ENCODE measurements at regions of chr7 and their contacts with region 1.

Region 1: GRCh38 chr7:54773472-54774399 is 14.7 kb upstream of the SEC61G start:
- DNase-seq: peak; percentile 75 to 91 (median 82)
- ATAC-seq: peak; percentile 100
- H3K4me3 ChIP-seq: peak overlapping the region; percentile 4 to 21
- H3K27ac ChIP-seq: peak overlapping the region; percentile 1 to 41
- H3K4me1 ChIP-seq: peaks cover 0 to 8% of the 10 kb centered on the region in 2 donors
- H3K27me3 ChIP-seq: peaks cover 0 to 9% of the 10 kb centered on the region in 2 donors
- CTCF ChIP-seq: peak; percentile 80 to 82

Region 2: DNA sequence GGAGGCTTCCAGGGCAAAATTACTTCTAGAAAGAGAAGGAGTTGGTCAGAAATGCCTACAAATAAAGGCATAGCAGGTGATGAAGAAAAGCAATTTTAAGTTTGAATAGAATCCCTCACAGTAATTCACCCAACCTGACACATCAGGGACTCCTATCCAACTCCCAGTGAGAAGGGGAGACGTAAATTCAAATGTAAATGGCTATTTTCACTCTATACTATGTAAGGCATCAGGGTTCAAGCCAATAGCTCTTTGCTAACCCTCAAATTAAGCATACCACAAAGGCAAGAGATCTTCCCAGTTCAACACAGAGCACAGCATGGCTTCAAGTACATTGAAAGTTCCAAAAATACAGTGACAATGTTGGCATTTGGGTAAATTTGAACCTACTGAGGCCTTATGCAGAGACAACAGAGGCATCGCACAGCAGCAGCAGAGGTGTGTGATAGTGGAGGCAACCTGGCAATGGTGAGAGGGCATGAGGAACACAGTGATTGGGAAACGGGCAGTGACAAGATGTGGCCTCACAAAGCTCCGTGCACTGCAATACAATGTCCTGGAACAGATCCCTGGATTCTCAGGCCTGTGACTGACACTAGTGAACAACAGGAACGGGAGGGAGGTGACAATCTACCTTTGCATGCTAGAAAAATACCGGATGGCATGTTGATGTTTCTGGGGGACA is 135.9 kb before region 1 on chr7:
- intact Hi-C with region 1: no loop called
- DNase-seq: no peak
- ATAC-seq: no peak
- H3K4me3 ChIP-seq: no peak overlapping the region
- H3K27ac ChIP-seq: no peak overlapping the region
- H3K4me1 ChIP-seq: no peaks in the 10 kb centered on the region
- H3K27me3 ChIP-seq: no peaks in the 10 kb centered on the region
- CTCF ChIP-seq: no peak

Region 3: DNA sequence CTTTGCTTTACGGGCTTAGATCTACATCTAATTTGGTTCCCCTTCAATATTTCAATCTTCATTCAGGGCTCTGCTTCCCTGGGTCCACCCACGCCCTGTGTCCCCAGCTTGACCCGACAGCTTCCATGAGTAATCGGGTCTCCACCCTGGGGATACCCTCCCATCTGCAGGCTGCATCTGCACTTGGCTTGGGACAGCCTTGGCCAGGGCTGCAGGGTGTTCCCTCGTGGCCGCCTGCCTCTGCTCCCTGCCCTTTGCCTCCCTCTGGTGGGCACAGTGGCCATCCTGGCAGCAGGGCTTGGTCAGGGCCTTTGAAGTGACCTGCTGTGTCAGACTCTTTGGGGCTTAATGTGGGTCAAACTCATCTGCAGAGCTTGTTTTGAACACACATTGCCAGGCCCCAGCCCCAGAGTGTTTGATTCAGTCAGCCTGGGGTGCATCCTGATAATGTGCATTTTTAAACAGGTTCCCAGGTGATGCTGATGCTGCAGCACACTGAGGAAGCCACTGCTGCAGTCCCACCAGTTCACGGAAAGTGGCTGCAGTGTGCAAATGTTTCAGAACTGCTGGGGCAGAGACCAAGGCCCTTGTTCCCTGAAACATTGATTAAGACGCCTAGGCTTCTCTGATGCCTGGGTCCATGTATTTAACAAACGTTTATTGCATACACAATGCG is 65.9 kb after region 1 on chr7:
- intact Hi-C with region 1: loop called in 1 of 2 experiments (anchors 10 kb)
- DNase-seq: peak in 3 of 4 donors; percentile 42 to 88 (median 57)
- ATAC-seq: peak; percentile 94
- H3K4me3 ChIP-seq: no peak overlapping the region
- H3K27ac ChIP-seq: no peak overlapping the region
- H3K4me1 ChIP-seq: peaks cover 0 to 10% of the 10 kb centered on the region in 2 donors
- H3K27me3 ChIP-seq: no peaks in the 10 kb centered on the region
- CTCF ChIP-seq: peak; percentile 44 to 78

Region 4: GRCh38 chr7:55255496-55256435 is 482.0 kb after region 1 on chr7:
- intact Hi-C with region 1: loop called in 1 of 2 experiments (anchors 5 kb)
- DNase-seq: peak; percentile 69 to 91 (median 87)
- ATAC-seq: peak; percentile 96
- H3K4me3 ChIP-seq: peak overlapping the region; percentile 48 to 52
- H3K27ac ChIP-seq: no peak overlapping the region
- H3K4me1 ChIP-seq: peaks cover 4 to 19% of the 10 kb centered on the region in 2 donors
- H3K27me3 ChIP-seq: peaks cover 0 to 53% of the 10 kb centered on the region in 2 donors
- CTCF ChIP-seq: peak; percentile 78 to 83

Measured in left lung (tissue), 14 donors.